A673 (cell line): ENCODE measurements at regions of chr1 and their contacts with region 1.

Region 1: DNA sequence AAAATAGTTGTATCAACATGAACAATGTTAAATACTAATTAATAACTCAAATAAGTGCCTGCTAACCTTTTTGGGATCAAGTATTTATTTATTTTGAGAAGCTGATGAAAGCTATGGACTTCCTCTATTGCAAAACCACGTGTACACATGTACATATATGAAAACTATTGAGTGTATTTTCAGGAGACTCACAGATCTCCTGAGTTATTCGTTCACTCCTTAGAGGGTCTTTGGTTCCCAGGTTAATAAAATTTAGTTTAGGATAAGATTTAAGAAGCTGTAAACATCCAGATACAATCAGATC is 130.5 kb downstream of the DISC1 start:
- DNase-seq: no peak
- H3K4me3 ChIP-seq: no peak overlapping the region
- H3K27ac ChIP-seq: no peak overlapping the region
- H3K4me1 ChIP-seq: no peaks in the 10 kb centered on the region
- H3K27me3 ChIP-seq: no peaks in the 10 kb centered on the region
- CTCF ChIP-seq: no peak; the same call in 1 of the 2 replicates

Region 2: DNA sequence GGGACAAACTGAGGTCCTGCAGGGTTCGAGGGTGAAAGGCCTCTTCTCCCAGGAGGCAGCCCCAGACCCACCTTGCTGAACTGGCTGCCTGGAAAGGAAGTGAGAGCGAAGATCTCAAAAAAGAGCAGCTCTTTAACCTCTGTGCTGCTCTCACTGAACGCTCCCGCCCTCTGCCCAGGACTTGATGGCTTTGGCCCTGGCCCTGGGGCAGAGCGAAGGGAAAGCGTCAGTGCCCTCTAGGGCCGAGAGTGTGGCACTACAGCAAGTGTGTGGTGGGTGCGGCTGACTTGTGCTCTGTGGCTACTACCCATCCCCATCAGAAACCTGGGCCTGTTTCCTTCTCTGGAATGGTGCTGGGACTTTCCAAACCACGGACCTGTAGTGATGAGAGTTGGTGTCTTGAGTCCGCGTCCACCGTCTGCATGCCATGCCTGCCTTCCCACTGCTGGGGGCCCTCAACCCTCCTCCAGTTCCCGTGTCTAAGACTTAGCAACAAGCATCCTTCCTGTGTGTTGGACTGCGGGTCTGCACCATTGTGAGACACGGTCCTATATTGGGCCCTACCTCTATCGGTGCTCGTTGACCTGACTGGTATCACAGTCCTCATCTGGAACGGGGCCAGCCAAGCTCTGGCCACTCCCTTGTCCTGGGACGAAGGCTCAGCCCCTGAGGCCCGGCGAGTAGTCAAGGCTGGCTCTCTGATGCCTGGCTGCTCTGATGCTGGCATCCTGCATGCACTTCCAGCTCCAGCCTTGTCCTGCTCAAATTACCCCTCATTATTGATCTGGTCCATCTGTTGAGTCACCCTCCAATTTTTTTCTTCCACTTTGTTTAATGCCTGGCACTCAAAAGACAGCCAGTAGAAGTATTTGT is 49.8 kb after region 1 on chr1:
- CTCF ChIA-PET with region 1: interaction called, 4 read pairs
- POLR2A ChIA-PET with region 1: no interaction called
- intact Hi-C with region 1: loop called (anchors 2 kb)
- DNase-seq: peak; percentile 60
- H3K4me3 ChIP-seq: no peak overlapping the region
- H3K27ac ChIP-seq: no peak overlapping the region
- H3K4me1 ChIP-seq: no peaks in the 10 kb centered on the region
- H3K27me3 ChIP-seq: no peaks in the 10 kb centered on the region
- CTCF ChIP-seq: peak; percentile 65

Region 3: GRCh38 chr1:233240829-233241682 is 1484.0 kb after region 1 on chr1:
- CTCF ChIA-PET with region 1: no interaction called
- POLR2A ChIA-PET with region 1: no interaction called
- intact Hi-C with region 1: loop called (anchors 2 kb)
- DNase-seq: peak; percentile 60
- H3K4me3 ChIP-seq: no peak overlapping the region
- H3K27ac ChIP-seq: no peak overlapping the region
- H3K4me1 ChIP-seq: peaks cover 6% of the 10 kb centered on the region
- H3K27me3 ChIP-seq: no peaks in the 10 kb centered on the region
- CTCF ChIP-seq: peak; percentile 84